ENCODE measurements at regions of chr12 and their contacts with region 1.

Region 1: DNA sequence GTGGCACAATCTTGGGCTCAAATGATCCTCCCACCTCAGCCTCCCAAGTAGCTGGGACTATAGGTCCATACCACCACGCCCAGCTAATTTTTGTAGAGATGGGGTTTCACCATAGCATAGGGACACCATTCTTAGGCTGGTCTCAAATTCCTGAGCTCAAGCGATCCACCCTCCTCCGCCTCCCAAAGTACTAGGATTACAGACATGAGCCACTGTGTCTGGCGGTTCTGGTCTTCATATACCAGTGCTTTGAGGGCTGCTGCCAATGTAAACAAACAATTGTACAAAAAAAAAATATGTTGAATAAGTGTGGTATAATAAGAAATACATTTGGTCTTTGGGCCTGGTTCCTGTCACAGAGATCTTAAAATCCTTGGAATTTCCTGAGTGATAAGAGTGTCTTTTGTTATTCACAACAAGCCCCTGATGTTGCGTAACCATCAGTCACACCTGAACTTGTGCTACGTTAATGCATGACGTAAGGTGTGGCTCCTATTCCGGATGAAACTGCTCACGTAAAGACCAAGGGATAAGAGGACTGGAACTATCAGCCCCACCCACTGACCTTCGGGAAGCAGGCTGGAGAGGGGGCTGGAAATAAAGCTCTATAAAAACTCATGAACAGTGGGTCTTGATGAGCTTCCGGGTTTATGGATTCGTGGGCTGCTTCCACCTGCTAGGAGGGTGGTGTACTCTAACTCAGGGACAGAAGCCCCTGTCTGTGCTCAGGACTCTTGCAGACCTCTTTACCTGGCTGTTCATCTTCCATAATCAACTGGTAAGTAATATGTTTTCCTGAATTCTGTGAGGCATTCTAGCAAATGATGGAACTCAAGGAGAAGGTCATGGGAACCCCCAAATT is 16.5 kb upstream of the RIMKLB start:
- DNase-seq: no peak
- ATAC-seq: no peak
- H3K4me3 Mint-ChIP-seq: no peak overlapping the region
- H3K27ac Mint-ChIP-seq: no peak overlapping the region
- H3K4me1 Mint-ChIP-seq: peaks cover 1% of the 10 kb centered on the region
- H3K27me3 Mint-ChIP-seq: peaks cover 5% of the 10 kb centered on the region
- CTCF ChIP-seq: no peak

Region 2: DNA sequence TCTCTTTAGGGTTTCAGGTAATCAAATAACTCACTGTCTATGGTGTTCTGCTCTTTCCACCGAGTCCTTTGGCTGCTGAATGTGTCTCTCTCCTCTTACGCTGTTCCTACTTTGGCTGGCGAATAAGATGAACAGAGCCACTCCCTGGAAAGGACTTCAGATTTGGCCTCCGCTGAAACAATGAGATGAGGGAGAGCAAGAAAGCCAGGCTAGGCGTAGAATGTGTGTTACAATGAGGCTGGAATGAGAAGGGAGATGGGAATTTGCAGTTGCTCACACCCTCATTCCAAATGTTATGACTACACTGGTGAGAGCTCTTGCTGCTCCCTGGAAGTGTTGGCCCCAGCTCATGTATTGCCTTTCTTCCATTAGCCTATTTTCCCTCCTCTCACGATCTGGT is 18.7 kb before region 1 on chr12 and contains the start of gene MFAP5:
- CTCF ChIA-PET with region 1: interaction called, 4 read pairs
- POLR2A ChIA-PET with region 1: no interaction called
- intact Hi-C with region 1: loop called (anchors 1 kb)
- DNase-seq: no peak
- ATAC-seq: no peak
- H3K4me3 Mint-ChIP-seq: no peak within 1 kb of the TSS
- H3K27ac Mint-ChIP-seq: no peak within 1 kb of the TSS
- H3K4me1 Mint-ChIP-seq: peaks cover 4% of the 10 kb centered on the region
- H3K27me3 Mint-ChIP-seq: peaks cover 2% of the 10 kb centered on the region
- CTCF ChIP-seq: no peak
- total RNA-seq, gene MFAP5: 0.35 TPM in 1 of 2 replicates, not detected in the other

Region 3: DNA sequence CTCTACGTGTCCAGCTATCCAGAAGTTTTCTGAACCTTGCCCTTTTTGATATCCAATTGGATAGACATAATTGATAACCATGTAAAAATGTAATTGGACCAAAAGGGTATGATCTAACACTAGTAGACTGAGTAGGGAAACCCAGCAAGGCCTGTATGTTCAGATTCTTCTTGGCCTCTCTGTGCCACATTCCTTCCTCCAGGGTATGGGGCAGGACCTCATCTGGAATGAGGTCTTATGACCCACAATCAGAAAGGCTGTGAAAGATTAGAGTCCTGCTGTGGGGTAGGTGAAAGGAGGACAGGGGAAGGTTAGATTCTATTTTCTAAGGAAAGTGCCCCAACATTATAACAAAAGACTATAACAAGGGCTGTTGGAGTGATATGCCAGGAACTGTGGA is 89.8 kb after region 1 on chr12:
- CTCF ChIA-PET with region 1: no interaction called
- POLR2A ChIA-PET with region 1: no interaction called
- intact Hi-C with region 1: no loop called
- DNase-seq: no peak
- ATAC-seq: no peak
- H3K4me3 Mint-ChIP-seq: no peak overlapping the region
- H3K27ac Mint-ChIP-seq: no peak overlapping the region
- H3K4me1 Mint-ChIP-seq: no peaks in the 10 kb centered on the region
- H3K27me3 Mint-ChIP-seq: no peaks in the 10 kb centered on the region
- CTCF ChIP-seq: no peak

Region 4: GRCh38 chr12:8823565-8824300 is 142.5 kb after region 1 on chr12:
- CTCF ChIA-PET with region 1: interaction called, 6 read pairs
- POLR2A ChIA-PET with region 1: no interaction called
- intact Hi-C with region 1: loop called (anchors 1 kb)
- DNase-seq: no peak
- ATAC-seq: no peak
- H3K4me3 Mint-ChIP-seq: no peak overlapping the region
- H3K27ac Mint-ChIP-seq: no peak overlapping the region
- H3K4me1 Mint-ChIP-seq: no peaks in the 10 kb centered on the region
- H3K27me3 Mint-ChIP-seq: peaks cover 3% of the 10 kb centered on the region
- CTCF ChIP-seq: no peak

Region 5: GRCh38 chr12:8860165-8860961 is 179.1 kb after region 1 on chr12:
- CTCF ChIA-PET with region 1: interaction called, 45 read pairs
- POLR2A ChIA-PET with region 1: no interaction called
- intact Hi-C with region 1: loop called (anchors 1 kb)
- DNase-seq: no peak
- ATAC-seq: peak; percentile 34
- H3K4me3 Mint-ChIP-seq: no peak overlapping the region
- H3K27ac Mint-ChIP-seq: no peak overlapping the region
- H3K4me1 Mint-ChIP-seq: no peaks in the 10 kb centered on the region
- H3K27me3 Mint-ChIP-seq: peaks cover 3% of the 10 kb centered on the region
- CTCF ChIP-seq: no peak

Region 6: DNA sequence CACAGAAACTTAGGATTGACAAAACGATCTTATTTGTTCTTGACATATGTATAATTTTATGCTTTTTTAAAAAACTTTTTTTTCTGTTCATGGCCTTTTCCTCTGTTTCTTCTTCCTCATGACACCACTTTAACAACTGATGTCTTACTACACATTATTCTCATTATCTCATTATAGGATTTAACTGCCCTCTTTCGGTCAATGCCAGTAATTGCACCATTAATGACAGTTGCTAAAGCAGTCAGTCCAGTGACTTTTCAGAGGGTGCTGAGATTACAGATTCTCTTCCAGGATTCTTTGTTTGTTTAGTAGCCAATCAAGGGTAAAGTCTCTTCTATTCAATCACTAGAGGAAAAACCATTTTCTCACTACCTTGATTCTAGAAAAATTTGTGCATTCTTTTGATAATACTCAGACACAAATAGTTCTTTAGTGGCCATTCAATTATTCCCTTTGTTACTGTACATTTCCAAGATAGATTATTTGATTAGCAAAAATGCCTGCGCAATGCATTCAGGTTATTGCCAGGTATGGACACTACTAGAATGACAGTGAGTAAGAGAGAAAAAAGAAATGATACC is 358.2 kb after region 1 on chr12:
- CTCF ChIA-PET with region 1: interaction called, 6 read pairs
- POLR2A ChIA-PET with region 1: no interaction called
- intact Hi-C with region 1: loop called (anchors 1 kb)
- DNase-seq: no peak
- ATAC-seq: peak; percentile 69
- H3K4me3 Mint-ChIP-seq: no peak overlapping the region
- H3K27ac Mint-ChIP-seq: no peak overlapping the region
- H3K4me1 Mint-ChIP-seq: no peaks in the 10 kb centered on the region
- H3K27me3 Mint-ChIP-seq: peaks cover 2% of the 10 kb centered on the region
- CTCF ChIP-seq: peak; percentile 63

Region 7: DNA sequence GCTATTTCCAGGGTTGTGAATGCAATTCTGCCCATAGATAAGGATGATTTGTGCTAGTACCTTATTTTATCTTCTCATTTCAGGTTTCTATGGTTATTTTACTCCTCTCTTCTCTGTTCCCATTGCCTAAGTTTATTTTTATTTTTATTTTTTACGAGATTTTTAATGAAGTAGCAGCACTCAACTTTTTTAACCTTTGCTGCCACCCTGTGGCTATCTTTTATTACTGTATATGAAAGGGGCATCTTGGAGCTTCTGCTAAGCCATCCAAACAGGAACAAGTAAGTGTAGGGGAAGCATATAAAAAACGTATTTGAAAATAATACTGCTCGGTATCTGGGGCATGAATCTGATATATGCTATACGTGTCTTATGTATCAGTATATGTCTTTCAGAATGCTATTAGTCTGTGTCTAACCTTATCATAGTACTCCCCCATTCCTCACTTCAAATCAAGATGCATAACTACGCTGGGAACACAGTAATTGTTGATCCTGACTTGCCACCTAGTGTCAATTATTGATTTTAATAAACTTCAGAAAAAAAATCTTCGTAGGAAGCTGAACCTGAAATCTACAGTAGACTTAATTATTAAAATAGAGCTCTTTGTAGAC is 368.4 kb after region 1 on chr12:
- CTCF ChIA-PET with region 1: interaction called, 14 read pairs
- POLR2A ChIA-PET with region 1: no interaction called
- intact Hi-C with region 1: loop called (anchors 1 kb)
- DNase-seq: no peak
- ATAC-seq: peak; percentile 60
- H3K4me3 Mint-ChIP-seq: no peak overlapping the region
- H3K27ac Mint-ChIP-seq: no peak overlapping the region
- H3K4me1 Mint-ChIP-seq: no peaks in the 10 kb centered on the region
- H3K27me3 Mint-ChIP-seq: peaks cover 6% of the 10 kb centered on the region
- CTCF ChIP-seq: no peak

Measured in activated B cell treated with CpG ODN at 0.5 μM for 24 hours (primary cell).